ENCODE measurements at regions of chr5 and their contacts with region 1.

Region 1: GRCh38 chr5:83473346-83474163 is 2.0 kb downstream of the VCAN start:
- DNase-seq: peak; percentile 38
- H3K4me3 Mint-ChIP-seq: peak overlapping the region; percentile 82
- H3K27ac Mint-ChIP-seq: no peak overlapping the region
- H3K4me1 Mint-ChIP-seq: peaks cover 20% of the 10 kb centered on the region
- H3K27me3 Mint-ChIP-seq: peaks cover 79% of the 10 kb centered on the region

Region 2: DNA sequence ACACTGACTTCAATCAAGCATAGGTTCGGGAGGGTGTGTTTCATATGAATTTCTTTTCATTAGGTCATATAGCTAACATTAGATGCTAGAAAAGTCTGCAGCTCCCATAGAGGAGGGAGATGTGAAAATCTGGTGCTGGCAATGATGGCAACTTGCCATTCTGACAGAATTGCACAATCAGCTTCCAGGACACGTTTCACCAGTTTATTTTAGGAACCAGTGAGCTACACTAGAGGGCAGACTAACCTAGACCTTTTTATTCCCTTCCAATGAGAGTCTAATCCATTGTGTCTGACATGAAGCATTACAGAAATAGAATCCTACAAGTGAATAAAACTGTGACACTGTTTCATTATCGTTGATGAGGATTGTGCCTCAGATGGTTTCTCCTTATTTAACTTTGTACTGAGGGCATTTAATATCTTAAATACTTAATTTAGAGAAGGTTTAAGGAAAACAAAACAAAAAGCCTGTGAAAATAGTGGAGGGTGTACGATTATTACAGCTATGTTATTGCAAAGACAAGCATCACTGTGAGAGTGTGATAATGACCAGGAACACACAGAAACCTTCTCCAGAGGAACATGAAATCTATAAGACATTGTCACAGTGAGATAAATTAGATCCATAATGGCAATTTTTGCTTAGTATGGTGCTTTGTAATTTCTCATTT is 832.1 kb before region 1 on chr5:
- intact Hi-C with region 1: loop called (anchors 5 kb)
- DNase-seq: no peak
- H3K4me3 Mint-ChIP-seq: no peak overlapping the region
- H3K27ac Mint-ChIP-seq: no peak overlapping the region
- H3K4me1 Mint-ChIP-seq: peaks cover 8% of the 10 kb centered on the region
- H3K27me3 Mint-ChIP-seq: peaks cover 3% of the 10 kb centered on the region

Region 3: GRCh38 chr5:83076742-83077661 is 396.6 kb before region 1 on chr5 and contains the starts of genes TMEM167A and XRCC4:
- intact Hi-C with region 1: loop called (anchors 10 kb)
- DNase-seq: peak; percentile 93
- H3K4me3 Mint-ChIP-seq: peak within 1 kb of the TSS; percentile 97
- H3K27ac Mint-ChIP-seq: peak within 1 kb of the TSS; percentile 96
- H3K4me1 Mint-ChIP-seq: peaks cover 41% of the 10 kb centered on the region
- H3K27me3 Mint-ChIP-seq: no peaks in the 10 kb centered on the region
- total RNA-seq, gene TMEM167A: 67.7 and 70.9 TPM in 2 replicates
- total RNA-seq, gene XRCC4: 10.5 and 10.7 TPM in 2 replicates

Region 4: DNA sequence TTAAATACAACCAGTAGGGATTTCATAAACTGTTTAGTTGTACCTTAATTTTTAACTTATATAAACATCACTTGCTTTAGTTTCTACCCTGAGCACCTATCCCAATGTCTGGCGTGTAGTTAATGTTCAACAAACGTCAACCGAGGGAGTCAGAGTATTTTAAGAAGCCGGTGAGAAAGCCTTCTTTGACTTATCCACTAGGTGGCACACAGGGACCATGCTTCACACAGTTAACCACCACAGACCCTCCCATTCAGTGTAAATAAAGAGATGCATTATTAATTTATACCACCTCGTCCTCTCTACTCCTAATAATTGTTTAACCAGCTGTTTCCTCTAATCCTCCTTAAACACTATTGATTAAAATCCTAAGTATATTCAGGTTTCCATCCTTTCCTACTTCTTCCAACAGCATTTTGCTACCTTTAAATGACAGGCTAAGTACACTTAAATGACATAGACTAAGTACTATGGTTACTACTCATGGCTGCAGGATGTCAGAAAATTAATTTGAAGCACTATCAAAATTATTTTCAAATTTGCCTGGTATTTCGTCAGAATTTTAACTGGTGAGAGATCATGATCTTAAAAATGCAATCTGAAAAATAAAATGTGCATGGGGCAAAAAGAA is 244.8 kb after region 1 on chr5:
- intact Hi-C with region 1: loop called (anchors 10 kb)
- DNase-seq: no peak
- H3K4me3 Mint-ChIP-seq: no peak overlapping the region
- H3K27ac Mint-ChIP-seq: no peak overlapping the region
- H3K4me1 Mint-ChIP-seq: peaks cover 5% of the 10 kb centered on the region
- H3K27me3 Mint-ChIP-seq: peaks cover 46% of the 10 kb centered on the region

Region 5: GRCh38 chr5:83750749-83751148 is 277.2 kb after region 1 on chr5:
- intact Hi-C with region 1: no loop called
- DNase-seq: no peak
- H3K4me3 Mint-ChIP-seq: no peak overlapping the region
- H3K27ac Mint-ChIP-seq: no peak overlapping the region
- H3K4me1 Mint-ChIP-seq: no peaks in the 10 kb centered on the region
- H3K27me3 Mint-ChIP-seq: no peaks in the 10 kb centered on the region